Right ventricle myocardium superior (tissue), 1 donor: ENCODE measurements at regions of chrX and their contacts with region 1.

Region 1: GRCh38 chrX:9988762-9989161 is 21.6 kb downstream of the CLDN34 start:
- DNase-seq: no peak
- ATAC-seq: no peak

Region 2: DNA sequence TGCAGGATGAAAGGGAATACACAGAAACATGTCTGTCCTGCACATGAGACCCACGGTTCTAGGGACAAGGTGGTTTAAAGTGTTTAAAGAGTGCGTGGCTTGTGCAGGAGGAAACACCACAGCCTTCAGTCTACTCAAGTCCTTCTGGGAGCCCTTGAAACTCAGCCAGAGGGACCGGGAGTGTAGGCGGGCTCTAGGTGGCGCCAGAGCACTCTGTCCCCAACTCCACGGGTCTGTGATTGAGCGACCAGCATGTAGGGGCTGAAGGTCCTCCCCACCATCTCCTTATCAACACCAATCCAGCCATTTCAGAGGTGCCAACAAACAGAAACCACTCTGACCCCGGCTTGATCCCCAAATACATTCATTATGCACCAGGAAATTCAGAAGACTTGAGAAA is 103.6 kb before region 1 on chrX:
- intact Hi-C with region 1: loop called (anchors 10 kb)
- DNase-seq: peak; percentile 68
- ATAC-seq: peak; percentile 81